Activated CD8-positive, alpha-beta T cell treated with anti-CD3 and anti-CD28 coated beads for 36 hours (primary cell): ENCODE measurements at regions of chr16 and their contacts with region 1.

Region 1: DNA sequence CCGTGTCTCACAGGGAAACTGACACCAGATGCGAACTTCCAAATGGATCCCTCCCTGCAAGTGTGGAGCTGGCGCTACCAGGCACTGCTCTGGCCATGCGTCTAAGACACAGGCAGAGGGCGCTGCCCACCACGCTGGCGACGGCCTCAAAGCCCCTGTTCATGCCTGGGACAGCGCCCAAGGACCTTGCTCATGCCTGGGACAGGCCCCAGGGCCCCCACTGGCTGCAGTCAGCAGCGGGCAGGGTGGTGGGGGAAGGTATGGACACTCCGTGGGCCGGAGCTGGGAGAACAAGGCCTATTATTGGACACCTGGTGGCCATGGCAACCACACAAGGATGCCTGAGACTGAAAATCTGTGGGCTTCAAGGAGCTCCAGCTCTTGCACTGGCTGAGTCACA is 8.8 kb downstream of the ZG16B start:
- DNase-seq: peak; percentile 77
- ATAC-seq: peak; percentile 74
- H3K4me3 Mint-ChIP-seq: no peak overlapping the region
- H3K27ac Mint-ChIP-seq: peak overlapping the region; percentile 14
- H3K4me1 Mint-ChIP-seq: peaks cover 19% of the 10 kb centered on the region
- H3K27me3 Mint-ChIP-seq: no peaks in the 10 kb centered on the region
- CTCF ChIP-seq: peak; percentile 95

Region 2: GRCh38 chr16:2799205-2799865 is 39.6 kb before region 1 on chr16:
- CTCF ChIA-PET with region 1: no interaction called
- POLR2A ChIA-PET with region 1: no interaction called
- intact Hi-C with region 1: no loop called
- DNase-seq: no peak
- ATAC-seq: no peak
- H3K4me3 Mint-ChIP-seq: no peak overlapping the region
- H3K27ac Mint-ChIP-seq: no peak overlapping the region
- H3K4me1 Mint-ChIP-seq: no peaks in the 10 kb centered on the region
- H3K27me3 Mint-ChIP-seq: peaks cover 4% of the 10 kb centered on the region
- CTCF ChIP-seq: no peak

Region 3: GRCh38 chr16:2816751-2817339 is 22.1 kb before region 1 on chr16 and contains the start of gene PRSS21:
- CTCF ChIA-PET with region 1: no interaction called
- POLR2A ChIA-PET with region 1: no interaction called
- intact Hi-C with region 1: no loop called
- DNase-seq: peak; percentile 51
- ATAC-seq: peak; percentile 79
- H3K4me3 Mint-ChIP-seq: peak within 1 kb of the TSS; percentile 49
- H3K27ac Mint-ChIP-seq: no peak within 1 kb of the TSS
- H3K4me1 Mint-ChIP-seq: no peaks in the 10 kb centered on the region
- H3K27me3 Mint-ChIP-seq: peaks cover 1% of the 10 kb centered on the region
- CTCF ChIP-seq: peak; percentile 54
- total RNA-seq, gene PRSS21: 11.3 to 12.5 TPM

Region 4: DNA sequence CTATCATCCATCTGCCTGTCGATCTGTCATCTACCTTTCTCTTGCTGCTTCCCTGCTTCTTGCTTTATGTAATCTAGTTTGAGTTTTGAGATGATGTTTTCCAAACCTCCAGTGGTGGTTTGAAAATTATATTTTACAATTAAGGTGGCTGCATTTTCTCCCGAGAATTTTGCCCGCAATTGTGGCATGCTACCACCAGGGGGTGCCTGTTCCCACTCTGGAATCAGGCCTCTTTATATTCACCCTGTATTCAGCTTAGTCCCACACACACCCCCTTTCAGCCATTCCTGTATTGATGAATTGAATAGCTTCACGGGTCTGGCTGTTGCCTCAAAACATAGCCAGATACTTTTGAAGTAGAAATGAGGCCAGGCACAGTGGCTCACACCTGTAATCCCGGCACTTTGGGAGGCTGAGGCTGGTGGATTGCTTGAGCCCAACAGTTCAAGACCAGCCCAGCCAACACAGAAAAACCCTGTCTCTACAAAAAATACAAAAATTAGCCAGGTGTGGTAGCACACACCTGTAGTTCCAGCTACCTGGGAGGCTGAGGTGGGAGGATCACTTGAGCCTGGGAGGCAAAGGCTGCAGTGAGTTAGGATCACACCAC is 15.9 kb after region 1 on chr16:
- CTCF ChIA-PET with region 1: interaction called, 27 read pairs
- POLR2A ChIA-PET with region 1: no interaction called
- intact Hi-C with region 1: no loop called
- DNase-seq: peak; percentile 29
- ATAC-seq: no peak
- H3K4me3 Mint-ChIP-seq: no peak overlapping the region
- H3K27ac Mint-ChIP-seq: no peak overlapping the region
- H3K4me1 Mint-ChIP-seq: peaks cover 4% of the 10 kb centered on the region
- H3K27me3 Mint-ChIP-seq: peaks cover 6% of the 10 kb centered on the region
- CTCF ChIP-seq: peak; percentile 86

Region 5: GRCh38 chr16:2883027-2883851 is 44.3 kb after region 1 on chr16 and contains the start of gene FLYWCH2:
- CTCF ChIA-PET with region 1: interaction called, 17 read pairs
- POLR2A ChIA-PET with region 1: interaction called, 4 read pairs
- intact Hi-C with region 1: no loop called
- DNase-seq: peak; percentile 99
- ATAC-seq: peak; percentile 84
- H3K4me3 Mint-ChIP-seq: peak within 1 kb of the TSS; percentile 89
- H3K27ac Mint-ChIP-seq: peak within 1 kb of the TSS; percentile 91
- H3K4me1 Mint-ChIP-seq: peaks cover 13% of the 10 kb centered on the region
- H3K27me3 Mint-ChIP-seq: no peaks in the 10 kb centered on the region
- CTCF ChIP-seq: no peak
- total RNA-seq, gene FLYWCH2: 18.9 to 19.3 TPM

Region 6: GRCh38 chr16:2905431-2906387 is 66.8 kb after region 1 on chr16:
- CTCF ChIA-PET with region 1: interaction called, 25 read pairs
- POLR2A ChIA-PET with region 1: no interaction called
- intact Hi-C with region 1: no loop called
- DNase-seq: peak; percentile 100
- ATAC-seq: peak; percentile 87
- H3K4me3 Mint-ChIP-seq: peak overlapping the region; percentile 95
- H3K27ac Mint-ChIP-seq: peak overlapping the region; percentile 80
- H3K4me1 Mint-ChIP-seq: peaks cover 20% of the 10 kb centered on the region
- H3K27me3 Mint-ChIP-seq: no peaks in the 10 kb centered on the region
- CTCF ChIP-seq: no peak

Region 7: GRCh38 chr16:2911580-2912329 is 72.8 kb after region 1 on chr16 and contains the start of gene FLYWCH1:
- CTCF ChIA-PET with region 1: interaction called, 25 read pairs
- POLR2A ChIA-PET with region 1: interaction called, 4 read pairs
- intact Hi-C with region 1: no loop called
- DNase-seq: peak; percentile 99
- ATAC-seq: peak; percentile 99
- H3K4me3 Mint-ChIP-seq: peak within 1 kb of the TSS; percentile 85
- H3K27ac Mint-ChIP-seq: peak within 1 kb of the TSS; percentile 81
- H3K4me1 Mint-ChIP-seq: peaks cover 27% of the 10 kb centered on the region
- H3K27me3 Mint-ChIP-seq: no peaks in the 10 kb centered on the region
- CTCF ChIP-seq: no peak
- total RNA-seq, gene FLYWCH1: 33.4 to 34.9 TPM

Region 8: GRCh38 chr16:2919511-2920255 is 80.8 kb after region 1 on chr16:
- CTCF ChIA-PET with region 1: interaction called, 22 read pairs
- POLR2A ChIA-PET with region 1: no interaction called
- intact Hi-C with region 1: no loop called
- DNase-seq: peak; percentile 80
- ATAC-seq: peak; percentile 88
- H3K4me3 Mint-ChIP-seq: no peak overlapping the region
- H3K27ac Mint-ChIP-seq: no peak overlapping the region
- H3K4me1 Mint-ChIP-seq: peaks cover 9% of the 10 kb centered on the region
- H3K27me3 Mint-ChIP-seq: no peaks in the 10 kb centered on the region
- CTCF ChIP-seq: peak; percentile 97

Region 9: DNA sequence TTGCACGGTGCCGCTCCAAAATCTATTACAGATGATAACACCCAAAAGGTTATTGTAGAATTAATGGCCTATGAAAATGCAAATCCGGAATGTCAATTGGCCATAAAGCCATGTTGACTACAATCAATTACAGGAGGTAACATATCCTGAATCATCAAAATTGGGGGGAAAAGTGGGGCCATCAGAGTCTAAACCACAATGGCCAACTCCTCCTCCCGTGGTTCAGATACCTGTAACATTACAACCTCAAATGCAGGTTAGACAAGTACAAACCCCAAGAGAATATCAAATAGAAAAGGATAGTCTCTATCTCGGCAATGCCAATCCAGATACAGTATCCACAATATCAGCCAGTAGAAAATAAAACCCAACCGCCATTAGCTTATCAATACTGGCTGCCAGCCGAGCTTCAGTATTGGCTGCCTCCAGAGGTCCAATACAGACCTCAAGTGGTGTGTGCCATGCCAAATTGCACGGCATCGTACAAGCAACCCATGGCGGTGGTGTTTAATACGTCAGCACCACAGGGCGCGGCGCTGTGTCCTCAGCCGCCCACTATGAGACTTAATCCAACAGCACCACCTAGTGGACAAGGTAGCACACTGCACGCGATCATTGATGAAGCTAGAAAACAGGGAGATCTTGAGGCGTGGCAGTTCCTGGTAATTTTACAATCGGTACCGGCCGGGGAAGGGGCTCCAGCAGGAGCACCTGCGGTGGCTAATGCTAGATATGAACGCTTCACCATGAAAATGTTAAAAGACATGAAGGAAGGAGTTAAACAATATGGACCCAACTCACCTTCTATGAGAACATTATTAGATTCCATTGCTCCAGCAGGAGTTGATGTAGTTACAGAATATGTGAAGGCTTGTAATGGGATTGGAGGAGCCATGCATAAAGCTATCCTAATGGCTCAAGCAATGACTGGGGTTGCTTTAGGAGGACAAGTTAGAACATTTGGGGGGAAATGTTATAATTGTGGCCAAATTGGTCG is 88.0 kb after region 1 on chr16:
- CTCF ChIA-PET with region 1: interaction called, 22 read pairs
- POLR2A ChIA-PET with region 1: interaction called, 3 read pairs
- intact Hi-C with region 1: no loop called
- DNase-seq: peak; percentile 95
- ATAC-seq: peak; percentile 99
- H3K4me3 Mint-ChIP-seq: no peak overlapping the region
- H3K27ac Mint-ChIP-seq: no peak overlapping the region
- H3K4me1 Mint-ChIP-seq: peaks cover 10% of the 10 kb centered on the region
- H3K27me3 Mint-ChIP-seq: no peaks in the 10 kb centered on the region
- CTCF ChIP-seq: peak; percentile 96